ENCODE measurements at regions of chr1 and their contacts with region 1.

Region 1: DNA sequence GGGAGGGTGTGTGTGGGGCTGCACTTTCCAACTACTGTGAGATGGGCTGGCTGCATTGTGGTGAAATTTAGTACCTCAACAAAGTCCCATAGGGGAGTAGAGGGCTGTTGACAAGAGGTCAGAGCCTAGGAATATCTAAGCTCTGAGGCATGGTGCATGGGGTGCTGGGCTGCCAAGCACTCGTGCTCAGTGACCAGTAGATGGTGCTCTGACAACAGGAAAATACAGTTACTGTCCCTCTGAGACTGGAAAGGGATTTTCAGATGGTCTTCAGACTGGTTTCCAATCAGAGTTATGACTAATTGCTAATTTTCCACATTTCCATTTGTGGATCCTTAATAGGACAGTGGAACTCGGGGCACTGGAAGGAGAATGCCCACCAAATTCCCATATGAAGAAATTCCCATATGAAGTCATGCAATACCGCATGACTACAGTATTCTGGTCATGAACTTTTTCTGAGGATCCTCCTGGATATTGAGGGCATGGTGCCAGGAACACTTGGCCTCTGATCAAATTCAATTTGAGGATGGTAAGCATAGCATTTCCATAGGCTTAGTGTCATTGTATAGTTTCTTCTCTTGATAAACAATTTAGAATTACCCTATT is 4.1 kb upstream of the CACNA1E start:
- DNase-seq: peak in 2 of 3 donors; percentile 43 to 71
- ATAC-seq: peak; percentile 76
- H3K4me3 ChIP-seq: no peak overlapping the region
- H3K4me1 ChIP-seq: peaks cover 5% of the 10 kb centered on the region
- CTCF ChIP-seq: peak; percentile 55

Region 2: DNA sequence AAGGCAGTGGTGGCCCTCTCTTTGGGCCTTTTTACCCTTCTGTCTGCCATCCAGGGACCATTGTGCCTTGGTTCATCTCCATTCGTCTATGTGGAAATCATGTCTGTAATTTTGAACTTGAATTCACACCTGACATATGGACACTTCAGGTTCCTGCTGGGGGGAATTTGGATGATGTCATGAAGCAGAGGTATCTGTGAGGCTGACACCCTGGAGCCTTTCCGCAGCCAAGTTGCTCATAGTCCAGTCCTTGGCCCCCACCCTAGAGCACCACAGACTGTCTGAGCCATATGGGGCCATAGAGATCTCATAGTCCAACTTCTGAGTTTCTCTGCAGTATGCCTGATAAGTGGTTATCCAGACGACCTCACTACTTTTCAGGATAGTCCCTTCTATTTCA is 143.6 kb before region 1 on chr1:
- intact Hi-C with region 1: no loop called
- DNase-seq: no peak
- ATAC-seq: no peak
- H3K4me3 ChIP-seq: no peak overlapping the region
- H3K4me1 ChIP-seq: no peaks in the 10 kb centered on the region
- CTCF ChIP-seq: no peak

Region 3: GRCh38 chr1:181676269-181676668 is 197.0 kb after region 1 on chr1:
- intact Hi-C with region 1: loop called (anchors 2 to 5 kb)
- DNase-seq: peak in 1 of 3 donors; percentile 71
- ATAC-seq: peak; percentile 71
- H3K4me3 ChIP-seq: no peak overlapping the region
- H3K4me1 ChIP-seq: no peaks in the 10 kb centered on the region
- CTCF ChIP-seq: no peak

Region 4: DNA sequence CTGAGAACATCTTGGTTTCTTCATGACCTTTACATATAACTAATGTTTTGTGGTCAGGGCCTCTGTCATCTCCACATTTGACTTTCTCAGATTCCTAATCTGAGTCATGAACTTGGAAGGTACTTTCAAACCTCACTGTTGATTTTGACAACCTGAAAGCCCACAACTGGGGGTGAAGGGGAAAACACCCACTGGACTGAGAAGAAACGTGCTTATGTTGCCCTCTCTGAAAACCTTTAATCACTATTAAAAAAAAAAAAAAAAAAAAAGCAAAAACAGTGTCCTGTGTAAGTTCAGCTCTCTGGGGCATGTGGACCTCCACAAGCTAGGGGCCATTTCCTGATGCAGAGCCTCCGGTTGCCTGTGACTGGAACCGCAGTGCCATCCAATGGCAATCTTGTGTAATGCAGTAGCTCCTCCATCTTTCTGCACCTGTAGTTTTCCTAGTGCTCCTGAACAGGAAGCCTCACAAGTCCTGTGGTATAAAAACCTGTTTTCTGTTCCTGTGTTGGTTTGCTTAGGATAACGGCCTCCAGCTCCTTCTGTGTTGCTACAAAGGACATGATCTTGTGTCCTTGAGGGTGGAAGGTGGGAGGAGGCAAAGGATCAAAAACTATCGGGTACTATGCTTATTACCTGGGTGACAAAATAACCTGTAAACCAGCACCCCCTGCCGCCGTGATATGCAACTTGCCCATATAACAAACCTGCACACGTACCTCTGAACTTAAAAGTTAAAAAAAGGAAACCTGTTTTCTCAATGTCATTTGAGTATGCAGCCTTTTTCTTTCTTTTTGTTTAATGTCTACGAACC is 457.7 kb after region 1 on chr1:
- intact Hi-C with region 1: loop called in 1 of 2 experiments (anchors 5 kb)
- DNase-seq: peak in 2 of 3 donors; percentile 42 to 67
- ATAC-seq: peak; percentile 93
- H3K4me3 ChIP-seq: no peak overlapping the region
- H3K4me1 ChIP-seq: no peaks in the 10 kb centered on the region
- CTCF ChIP-seq: peak; percentile 6